AG04449 (cell line): ENCODE measurements at regions of chr5 and their contacts with region 1.

Region 1: GRCh38 chr5:177546258-177546741 is 8.1 kb downstream of the FAM193B start:
- DNase-seq: peak; percentile 94
- H3K4me3 ChIP-seq: no peak overlapping the region
- CTCF ChIP-seq: peak; percentile 17

Region 2: DNA sequence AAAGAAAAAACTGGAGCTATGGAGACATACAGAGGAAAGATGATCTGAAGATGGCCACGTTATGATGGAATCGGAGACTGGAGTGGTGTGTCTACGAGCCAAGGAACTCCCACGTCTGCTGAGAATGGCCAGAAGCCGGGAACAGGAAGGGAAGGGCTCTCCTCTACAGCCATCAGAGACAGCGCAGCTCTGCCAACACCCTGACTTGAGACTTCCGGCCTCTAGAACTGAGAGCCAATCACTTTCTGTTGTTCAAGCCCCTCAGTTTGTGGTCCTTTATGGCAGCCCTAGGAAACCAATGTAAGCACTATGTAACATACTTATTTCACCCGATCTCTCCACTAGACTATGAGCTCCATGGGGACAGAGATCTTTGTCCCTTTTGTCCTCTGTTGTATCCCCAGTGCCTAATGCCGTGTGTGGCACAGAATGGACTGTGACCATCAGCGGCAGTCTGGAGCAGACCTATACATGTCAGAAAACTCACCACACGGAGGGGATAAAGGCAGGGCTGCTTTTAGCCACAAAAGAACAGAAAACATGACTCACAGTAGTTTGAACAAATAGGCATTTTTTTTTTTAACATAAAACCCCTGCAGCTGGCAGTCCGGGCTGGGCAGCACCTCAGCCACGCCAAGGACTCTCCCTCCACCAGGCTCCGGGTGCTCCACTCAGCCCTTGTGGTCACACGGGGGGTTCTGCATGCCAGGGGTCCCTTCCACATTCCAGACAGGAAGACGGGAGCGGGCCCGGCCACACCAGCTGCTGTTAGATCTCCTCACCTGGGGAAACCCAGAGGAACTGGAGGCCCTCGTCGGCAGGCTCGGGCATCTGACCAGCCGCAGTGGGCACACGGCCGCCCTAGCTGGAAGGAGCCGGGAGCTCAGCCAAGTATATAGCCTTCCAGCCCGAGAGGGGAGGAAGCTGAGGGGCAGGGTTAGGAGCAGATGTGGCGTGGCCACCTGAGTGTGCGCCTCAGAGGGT is 218.5 kb before region 1 on chr5:
- CTCF ChIA-PET with region 1: no interaction called
- POLR2A ChIA-PET with region 1: no interaction called
- DNase-seq: no peak
- H3K4me3 ChIP-seq: no peak overlapping the region
- CTCF ChIP-seq: no peak

Region 3: DNA sequence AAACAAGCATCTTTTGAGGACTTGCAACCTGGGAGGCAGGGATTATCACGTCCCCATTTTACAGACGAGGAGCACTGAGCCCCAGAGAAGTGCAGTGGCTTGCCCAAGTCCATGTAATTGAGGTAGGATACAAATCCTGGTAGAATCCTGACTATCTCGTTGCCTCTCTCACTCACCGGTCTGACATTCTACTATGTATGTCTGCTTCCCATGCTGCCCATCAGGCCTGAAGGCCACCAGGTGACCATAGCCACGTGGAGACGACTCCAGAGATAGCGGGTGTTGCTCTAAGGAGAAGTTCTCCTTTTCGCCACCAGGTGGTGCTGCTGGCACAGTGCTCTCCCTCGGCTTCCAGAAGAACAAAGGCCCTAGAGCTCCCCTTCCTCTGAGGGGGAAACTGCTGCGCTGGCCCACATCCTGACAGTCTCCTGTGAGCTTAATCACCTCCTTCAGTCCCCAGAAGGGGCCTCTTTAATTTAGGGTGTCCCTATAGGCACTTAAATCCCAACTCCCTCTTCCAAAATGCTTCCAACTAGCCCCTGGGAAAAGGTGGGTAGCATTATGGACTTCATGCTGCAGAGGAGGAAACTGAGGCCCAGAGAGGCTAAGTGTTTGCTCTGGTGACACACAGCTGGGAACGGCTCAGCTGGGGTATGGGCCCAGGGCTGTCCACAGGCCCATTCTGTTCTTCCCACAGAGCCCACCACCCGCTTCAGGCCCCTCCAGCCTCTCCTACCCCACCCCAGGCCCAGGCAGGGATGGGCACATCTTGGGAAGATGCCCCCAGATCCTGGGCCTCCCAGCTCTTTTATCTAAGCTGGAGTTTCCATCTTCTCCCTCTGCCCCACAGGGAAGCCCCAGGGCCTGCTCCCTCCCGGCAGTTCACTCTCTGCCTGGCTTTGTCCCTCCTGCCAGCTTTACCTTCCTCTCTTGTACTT is 155.7 kb before region 1 on chr5:
- CTCF ChIA-PET with region 1: no interaction called
- POLR2A ChIA-PET with region 1: no interaction called
- DNase-seq: no peak
- H3K4me3 ChIP-seq: no peak overlapping the region
- CTCF ChIP-seq: peak; percentile 89

Region 4: DNA sequence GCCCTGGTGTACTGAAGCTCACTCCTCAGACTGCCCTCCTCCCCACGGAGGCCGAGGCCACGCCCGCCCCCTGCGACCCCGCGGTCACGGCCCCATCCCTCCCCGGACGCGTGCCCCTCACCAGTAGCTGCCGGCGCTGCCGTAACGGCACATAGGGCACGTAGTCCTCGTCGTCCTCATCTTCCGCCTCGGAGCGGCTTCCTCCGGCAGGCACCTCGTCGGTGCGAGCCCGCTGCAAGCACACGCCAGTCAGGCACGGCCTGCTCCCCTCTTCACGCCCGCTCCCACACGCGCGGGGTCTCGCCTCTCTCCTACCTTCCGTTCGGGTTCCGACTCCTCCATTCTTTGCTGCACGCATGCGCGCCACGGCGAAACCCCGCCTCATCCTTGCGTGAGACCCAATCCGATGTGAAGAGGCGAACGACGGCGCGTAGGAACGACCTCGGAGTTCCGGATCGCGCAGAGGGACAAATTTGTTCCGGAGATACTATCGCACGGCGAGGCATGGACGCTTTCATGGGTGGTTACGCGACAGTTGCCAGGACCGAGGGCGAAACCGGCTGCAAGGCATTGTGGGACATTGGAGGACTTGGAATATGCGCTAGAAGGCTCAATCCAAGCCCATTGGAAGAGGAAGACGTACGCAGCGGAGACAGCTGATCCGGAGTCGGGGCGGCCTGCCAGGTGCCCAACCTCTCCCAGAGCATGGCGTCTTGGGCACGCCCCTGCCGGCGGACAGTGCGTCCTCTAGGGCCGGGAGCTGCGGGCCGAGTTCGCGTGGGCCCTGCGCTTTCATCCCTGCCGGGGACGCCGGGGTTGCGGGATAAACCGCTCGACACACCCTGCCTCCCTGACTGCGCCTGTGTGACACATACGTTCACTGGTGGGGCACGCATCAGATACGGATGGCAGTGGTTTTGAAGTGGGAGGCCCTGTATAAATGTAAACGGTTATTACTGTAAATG is 29.4 kb before region 1 on chr5 and contains the start of gene DDX41:
- CTCF ChIA-PET with region 1: interaction called, 3 read pairs
- POLR2A ChIA-PET with region 1: interaction called, 15 read pairs
- DNase-seq: peak; percentile 94
- H3K4me3 ChIP-seq: peak within 1 kb of the TSS; percentile 100
- CTCF ChIP-seq: peak; percentile 11

Region 5: GRCh38 chr5:177599731-177600507 is 53.6 kb after region 1 on chr5 and contains the start of gene B4GALT7:
- CTCF ChIA-PET with region 1: no interaction called
- POLR2A ChIA-PET with region 1: interaction called, 15 read pairs
- DNase-seq: no peak
- H3K4me3 ChIP-seq: peak within 1 kb of the TSS; percentile 80
- CTCF ChIP-seq: no peak